K562 (cell line): ENCODE measurements at regions of chr14 and their contacts with region 1.

Region 1: DNA sequence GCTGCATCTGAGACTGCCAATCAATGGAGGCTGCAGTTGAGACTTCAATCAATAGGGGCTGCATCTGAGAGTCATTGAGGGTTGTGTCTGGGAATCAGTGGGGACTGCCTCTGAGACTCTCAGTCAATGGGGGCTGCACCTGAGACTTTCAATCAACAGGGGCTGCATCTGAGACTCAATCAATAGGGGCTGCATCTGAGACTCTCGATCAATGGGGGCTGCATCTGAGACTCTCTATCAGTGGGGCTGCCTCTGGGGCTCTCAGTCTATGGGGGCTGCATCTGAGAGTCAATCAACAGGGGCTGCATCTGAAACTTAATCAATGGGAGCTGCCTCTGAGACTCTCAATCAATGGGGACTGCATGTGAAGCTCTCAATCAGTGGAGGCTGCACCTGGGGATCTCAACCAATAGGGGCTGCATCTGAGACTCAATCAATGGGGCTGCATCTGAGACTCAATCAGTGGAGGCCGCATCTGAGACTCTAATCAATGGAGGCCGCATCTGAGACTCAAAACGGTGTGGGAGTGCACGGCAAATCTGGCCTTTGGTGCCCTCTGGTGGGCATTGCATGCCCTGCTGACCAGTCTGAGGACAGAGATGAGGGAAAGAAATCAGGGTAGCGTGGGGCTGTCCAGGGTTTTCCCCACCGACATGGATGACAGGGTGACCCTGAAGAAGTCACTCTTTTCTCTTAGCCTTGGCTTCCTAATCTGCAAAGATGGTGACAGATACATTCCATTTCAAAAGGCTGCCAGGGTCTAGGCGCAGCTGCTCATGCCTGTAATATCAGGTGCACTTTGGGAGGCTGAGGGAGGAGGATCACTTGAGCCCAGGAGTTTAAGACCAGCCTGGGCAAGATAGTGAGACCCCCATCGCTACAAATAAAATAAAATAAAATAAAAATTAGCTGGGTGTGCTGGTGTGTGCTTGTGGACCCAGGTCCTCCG is 41.3 kb upstream of the EIF5 start:
- DNase-seq: peak; percentile 70 to 80 (median 72)
- ATAC-seq: peak; percentile 94
- H3K4me3 ChIP-seq: no peak overlapping the region
- H3K27ac ChIP-seq: no peak overlapping the region
- H3K4me1 ChIP-seq: peaks cover 0 to 8% of the 10 kb centered on the region in 2 experiments; a peak in 4 of 5 replicates
- H3K27me3 ChIP-seq: 0 out of 5 replicates have a peak, but pooled peaks cover 0 to 1% of the 10 kb centered on the region in 2 experiments
- CTCF ChIP-seq: peak; percentile 77 to 85 (median 84)
- EP300 ChIP-seq: no peak
- POLR2A ChIP-seq: no peak
- RAD21 ChIP-seq: peak; percentile 86 to 96

Region 2: GRCh38 chr14:103078093-103078749 is 214.5 kb before region 1 on chr14:
- CTCF ChIA-PET with region 1: interaction called, 11 read pairs
- POLR2A ChIA-PET with region 1: interaction called, 3 read pairs
- in situ Hi-C with region 1: loop called (anchors 5 kb)
- intact Hi-C with region 1: loop called (anchors 2 kb)
- DNase-seq: peak; percentile 63 to 87 (median 70)
- ATAC-seq: peak; percentile 67
- H3K4me3 ChIP-seq: no peak overlapping the region
- H3K27ac ChIP-seq: no peak overlapping the region
- H3K4me1 ChIP-seq: peaks cover 3 to 37% of the 10 kb centered on the region in 2 experiments; a peak in 4 of 5 replicates
- H3K27me3 ChIP-seq: no peaks in the 10 kb centered on the region; a peak in 1 of 5 replicates
- CTCF ChIP-seq: peak; percentile 78 to 81 (median 78)
- EP300 ChIP-seq: no peak
- POLR2A ChIP-seq: no peak
- RAD21 ChIP-seq: peak; percentile 24 to 73; a peak in 3 of 4 replicates

Region 3: DNA sequence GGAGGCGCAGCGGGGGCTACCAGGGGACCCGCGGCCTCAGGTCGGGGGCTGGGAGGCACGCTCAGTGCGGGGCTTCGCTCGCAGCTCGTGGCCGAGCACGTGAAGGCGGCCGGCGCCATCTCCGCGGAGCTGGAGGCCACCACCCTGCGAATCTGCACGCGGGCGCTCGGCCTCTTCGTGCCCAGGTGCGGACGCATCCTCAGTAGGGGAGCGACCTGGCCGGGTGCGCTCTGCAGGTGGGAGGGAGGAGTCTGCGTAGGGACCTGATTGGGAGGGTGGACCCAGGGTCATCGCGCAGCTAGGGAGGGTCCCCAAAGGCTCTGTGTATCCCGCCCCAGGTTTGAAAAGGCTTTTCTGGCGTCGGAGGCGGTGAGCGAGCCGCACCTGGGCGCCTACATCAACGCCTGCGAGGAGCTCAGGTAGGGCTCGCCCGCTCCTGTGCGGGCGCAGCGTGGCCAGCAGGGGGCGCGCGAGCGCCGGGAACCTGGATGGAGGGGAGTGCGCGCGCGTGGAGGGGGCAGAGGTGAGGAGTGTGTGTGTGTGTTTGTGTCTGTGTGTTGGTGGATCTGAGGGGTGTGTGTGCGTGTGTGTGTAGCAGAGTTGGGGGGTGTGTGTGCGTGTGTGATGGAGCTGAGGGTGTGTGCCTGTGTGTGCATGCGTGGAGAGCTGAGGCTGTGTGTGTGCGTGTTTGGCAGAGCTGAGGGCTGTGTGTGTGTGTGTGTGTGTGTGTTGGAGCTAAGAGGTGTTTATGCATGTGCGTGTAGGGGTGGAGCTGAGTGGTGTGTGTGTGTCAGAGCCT is 187.8 kb before region 1 on chr14:
- CTCF ChIA-PET with region 1: interaction called, 10 read pairs
- POLR2A ChIA-PET with region 1: interaction called, 4 read pairs
- in situ Hi-C with region 1: loop called (anchors 10 kb)
- intact Hi-C with region 1: loop called (anchors 2 kb)
- DNase-seq: peak; percentile 71 to 72 (median 71)
- ATAC-seq: peak; percentile 88
- H3K4me3 ChIP-seq: no peak overlapping the region
- H3K27ac ChIP-seq: no peak overlapping the region; the same call in 2 of the 3 replicates
- H3K4me1 ChIP-seq: peaks cover 31 to 87% of the 10 kb centered on the region in 2 experiments
- H3K27me3 ChIP-seq: no peaks in the 10 kb centered on the region
- CTCF ChIP-seq: peak; percentile 80 to 88 (median 85)
- EP300 ChIP-seq: no peak
- POLR2A ChIP-seq: 0 out of 2 replicates have a peak, but pooled peaks have one; percentile 35
- RAD21 ChIP-seq: peak; percentile 89 to 95

Region 4: GRCh38 chr14:103141119-103141796 is 151.4 kb before region 1 on chr14:
- CTCF ChIA-PET with region 1: interaction called, 11 read pairs
- POLR2A ChIA-PET with region 1: interaction called, 3 read pairs
- in situ Hi-C with region 1: no loop called
- intact Hi-C with region 1: loop called (anchors 1 kb)
- DNase-seq: peak; percentile 69 to 80 (median 72)
- ATAC-seq: peak; percentile 82
- H3K4me3 ChIP-seq: no peak overlapping the region
- H3K27ac ChIP-seq: no peak overlapping the region
- H3K4me1 ChIP-seq: peaks cover 19 to 33% of the 10 kb centered on the region in 2 experiments; a peak in 4 of 5 replicates
- H3K27me3 ChIP-seq: no peaks in the 10 kb centered on the region
- CTCF ChIP-seq: peak; percentile 78 to 87 (median 82)
- EP300 ChIP-seq: no peak
- POLR2A ChIP-seq: no peak
- RAD21 ChIP-seq: peak; percentile 44 to 79

Region 5: DNA sequence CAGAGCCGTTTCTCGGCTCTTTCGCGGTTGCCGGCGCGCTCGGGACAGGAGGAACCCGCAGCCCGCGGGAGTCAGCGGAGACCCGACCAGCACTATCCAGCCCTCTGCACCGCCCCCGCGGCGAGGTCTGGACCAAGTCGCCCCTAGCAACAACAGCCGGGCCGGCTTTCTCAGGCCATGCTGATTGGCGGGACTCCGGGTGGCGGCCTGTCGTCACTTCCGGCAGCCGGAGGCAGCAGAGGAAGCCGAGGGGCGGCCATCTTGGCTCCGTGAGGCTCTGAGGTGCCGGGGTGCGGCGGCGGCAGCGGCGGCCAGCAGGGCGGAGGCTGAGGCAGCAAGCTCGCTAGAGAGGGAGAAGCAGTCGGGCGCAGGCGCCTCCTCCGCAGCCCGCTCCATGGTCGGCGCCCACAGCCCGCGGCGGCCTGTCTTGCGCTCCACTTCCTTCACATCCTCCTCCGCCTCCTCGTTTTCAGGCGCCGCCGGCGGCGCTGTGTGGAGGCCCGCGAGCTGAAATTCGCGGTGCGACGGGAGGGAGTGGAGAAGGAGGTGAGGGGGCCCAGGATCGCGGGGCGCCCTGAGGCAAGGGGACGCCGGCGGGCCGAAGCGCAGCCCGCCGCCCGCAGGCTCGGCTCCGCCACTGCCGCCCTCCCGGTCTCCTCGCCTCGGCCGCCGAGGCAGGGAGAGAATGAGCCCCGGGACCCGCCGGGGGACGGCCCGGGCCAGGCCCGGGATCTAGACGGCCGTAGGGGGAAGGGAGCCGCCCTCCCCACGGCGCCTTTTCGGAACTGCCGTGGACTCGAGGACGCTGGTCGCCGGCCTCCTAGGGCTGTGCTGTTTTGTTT is 92.7 kb after region 1 on chr14 and contains the start of gene MARK3:
- CTCF ChIA-PET with region 1: no interaction called
- POLR2A ChIA-PET with region 1: no interaction called
- in situ Hi-C with region 1: loop called (anchors 5 kb)
- intact Hi-C with region 1: loop called (anchors 5 kb)
- DNase-seq: peak; percentile 93 to 96 (median 94)
- ATAC-seq: peak; percentile 94
- H3K4me3 ChIP-seq: peak within 1 kb of the TSS; percentile 96
- H3K27ac ChIP-seq: peak within 1 kb of the TSS; percentile 92
- H3K4me1 ChIP-seq: peaks cover 12 to 27% of the 10 kb centered on the region in 2 experiments; a peak in 4 of 5 replicates
- H3K27me3 ChIP-seq: no peaks in the 10 kb centered on the region
- CTCF ChIP-seq: no peak
- EP300 ChIP-seq: no peak
- POLR2A ChIP-seq: peak; percentile 83
- RAD21 ChIP-seq: no peak; a peak in 1 of 4 replicates
- polyA plus RNA-seq, gene MARK3: 10.1 to 18.2 TPM

Region 6: GRCh38 chr14:103391048-103391447 is 98.3 kb after region 1 on chr14:
- CTCF ChIA-PET with region 1: no interaction called
- POLR2A ChIA-PET with region 1: no interaction called
- in situ Hi-C with region 1: loop called (anchors 5 kb)
- intact Hi-C with region 1: loop called (anchors 5 kb)
- DNase-seq: peak in 2 of 4 experiments; percentile 19 to 47
- ATAC-seq: peak; percentile 24
- H3K4me3 ChIP-seq: no peak overlapping the region
- H3K27ac ChIP-seq: no peak overlapping the region
- H3K4me1 ChIP-seq: peaks cover 12 to 24% of the 10 kb centered on the region in 2 experiments
- H3K27me3 ChIP-seq: no peaks in the 10 kb centered on the region
- CTCF ChIP-seq: peak; percentile 75 to 92 (median 83)
- EP300 ChIP-seq: no peak
- POLR2A ChIP-seq: no peak
- RAD21 ChIP-seq: peak; percentile 45 to 62; a peak in 3 of 4 replicates